Activated CD4-positive, alpha-beta T cell treated with anti-CD3 and anti-CD28 coated beads for 36 hours (primary cell): ENCODE measurements at regions of chr2 and their contacts with region 1.

Region 1: DNA sequence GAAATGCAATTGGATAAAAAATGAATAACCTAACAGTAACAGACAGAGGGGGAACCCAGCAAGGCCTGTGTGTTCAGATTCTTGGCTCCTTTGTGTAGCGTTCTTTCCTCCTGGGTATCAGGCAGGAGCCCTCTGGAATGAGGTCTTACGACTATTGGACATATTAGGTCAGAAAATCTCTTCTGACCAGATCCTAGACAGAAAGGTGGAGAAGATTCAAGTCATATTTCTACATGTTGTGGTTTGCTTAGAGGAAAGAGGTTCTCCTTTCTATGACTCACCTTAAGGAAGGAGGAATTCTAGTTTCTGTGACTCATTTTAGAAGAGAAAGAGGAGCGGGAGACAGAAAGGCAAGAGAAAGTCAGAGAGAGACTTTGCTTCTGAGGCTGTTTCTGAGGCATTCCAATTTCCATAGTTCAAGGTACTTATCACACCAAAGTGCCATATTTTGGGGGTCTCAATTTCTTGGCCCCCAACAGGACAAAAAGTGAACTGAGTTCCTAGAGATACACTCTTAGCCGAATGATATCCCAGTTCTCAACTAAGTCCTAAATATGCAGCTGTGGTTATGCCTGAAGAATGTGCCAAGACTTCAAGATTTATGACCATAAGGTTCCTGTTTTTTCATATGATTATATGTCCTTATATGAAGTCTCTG is 618.6 kb downstream of the ZEB2 start:
- DNase-seq: no peak
- ATAC-seq: peak; percentile 60
- H3K4me3 Mint-ChIP-seq: no peak overlapping the region
- H3K27ac Mint-ChIP-seq: no peak overlapping the region
- H3K4me1 Mint-ChIP-seq: peaks cover 12% of the 10 kb centered on the region
- H3K27me3 Mint-ChIP-seq: peaks cover 8% of the 10 kb centered on the region

Region 2: DNA sequence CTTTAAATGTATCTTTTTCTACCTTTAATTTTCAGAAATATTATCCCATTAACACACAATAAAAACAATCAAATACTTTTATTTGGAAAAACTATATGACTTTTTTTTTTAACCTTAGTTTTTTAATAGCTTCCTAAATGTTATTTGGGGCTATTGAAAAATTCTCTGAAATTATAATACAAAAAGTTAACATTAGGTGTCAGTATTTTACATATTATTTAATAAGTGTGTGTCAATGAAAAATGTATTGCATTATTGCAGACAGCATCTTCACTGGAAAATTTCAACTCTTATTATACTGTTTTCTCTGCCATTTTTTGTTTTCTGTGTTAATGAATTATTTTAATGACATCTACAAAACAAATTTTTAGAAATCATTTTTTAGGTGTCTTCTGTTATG is 823.2 kb before region 1 on chr2:
- CTCF ChIA-PET with region 1: no interaction called
- POLR2A ChIA-PET with region 1: no interaction called
- intact Hi-C with region 1: loop called in 1 of 2 experiments (anchors 10 kb)
- DNase-seq: no peak
- ATAC-seq: no peak
- H3K4me3 Mint-ChIP-seq: no peak overlapping the region
- H3K27ac Mint-ChIP-seq: no peak overlapping the region
- H3K4me1 Mint-ChIP-seq: peaks cover under 1% of the 10 kb centered on the region
- H3K27me3 Mint-ChIP-seq: no peaks in the 10 kb centered on the region

Region 3: GRCh38 chr2:143463719-143464118 is 437.6 kb before region 1 on chr2:
- CTCF ChIA-PET with region 1: no interaction called
- POLR2A ChIA-PET with region 1: no interaction called
- intact Hi-C with region 1: no loop called
- DNase-seq: no peak
- ATAC-seq: peak; percentile 40
- H3K4me3 Mint-ChIP-seq: no peak overlapping the region
- H3K27ac Mint-ChIP-seq: no peak overlapping the region
- H3K4me1 Mint-ChIP-seq: peaks cover 23% of the 10 kb centered on the region
- H3K27me3 Mint-ChIP-seq: no peaks in the 10 kb centered on the region